ENCODE measurements at regions of chr2 and their contacts with region 1.

Region 1: DNA sequence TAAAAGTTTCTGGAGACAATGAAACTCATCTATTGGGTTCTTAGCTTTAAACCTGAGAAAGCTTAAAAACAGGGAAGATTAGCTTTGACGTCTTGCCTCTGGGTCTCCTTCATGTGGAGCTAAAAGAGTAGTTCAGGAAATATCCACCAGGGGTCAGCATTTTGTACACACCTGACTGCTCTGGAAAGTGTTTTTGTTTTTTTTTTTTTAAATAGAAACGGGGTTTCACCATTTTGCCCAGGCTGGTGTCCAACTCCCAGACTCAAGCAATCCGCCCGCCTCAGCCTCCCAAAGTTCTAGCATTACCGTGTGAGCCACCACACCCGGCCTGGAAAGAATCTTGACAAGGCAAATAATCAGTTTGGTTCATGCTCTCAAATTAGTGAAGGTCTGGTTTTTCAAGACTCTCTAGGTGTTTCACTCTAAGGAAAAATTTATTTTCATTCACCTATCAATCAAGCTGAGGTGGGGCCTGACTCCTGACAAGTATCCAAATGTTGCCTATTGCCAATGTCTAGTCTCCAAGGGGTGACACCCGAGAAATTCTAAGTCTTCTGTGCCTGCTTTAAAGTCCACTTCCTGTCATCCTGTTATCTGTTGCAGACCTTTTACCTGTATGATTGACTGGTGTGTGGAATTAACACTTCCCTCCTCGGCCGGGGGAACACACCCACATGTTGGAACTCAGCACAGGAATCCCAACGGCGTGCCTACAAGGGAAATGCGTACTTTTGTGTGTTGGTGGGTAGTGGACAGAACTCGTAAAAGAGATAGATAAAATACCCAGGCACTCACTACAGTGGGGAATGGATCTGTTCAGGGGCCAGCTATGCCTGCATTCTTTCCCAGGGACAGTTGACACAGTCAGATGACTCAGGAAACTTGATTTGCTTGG is 11.3 kb downstream of the IL1RN start:
- DNase-seq: peak in 1 of 3 donors; percentile 64
- ATAC-seq: peak; percentile 83 to 86 (median 85)
- H3K4me3 ChIP-seq: peak overlapping the region in 1 of 3 donors; percentile 13
- H3K27ac ChIP-seq: peak overlapping the region in 2 of 3 donors; percentile 23 to 33
- H3K4me1 ChIP-seq: no peaks in the 10 kb centered on the region
- H3K27me3 ChIP-seq: no peaks in the 10 kb centered on the region
- CTCF ChIP-seq: peak; percentile 76 to 89 (median 82)
- POLR2A ChIP-seq: no peak

Region 2: DNA sequence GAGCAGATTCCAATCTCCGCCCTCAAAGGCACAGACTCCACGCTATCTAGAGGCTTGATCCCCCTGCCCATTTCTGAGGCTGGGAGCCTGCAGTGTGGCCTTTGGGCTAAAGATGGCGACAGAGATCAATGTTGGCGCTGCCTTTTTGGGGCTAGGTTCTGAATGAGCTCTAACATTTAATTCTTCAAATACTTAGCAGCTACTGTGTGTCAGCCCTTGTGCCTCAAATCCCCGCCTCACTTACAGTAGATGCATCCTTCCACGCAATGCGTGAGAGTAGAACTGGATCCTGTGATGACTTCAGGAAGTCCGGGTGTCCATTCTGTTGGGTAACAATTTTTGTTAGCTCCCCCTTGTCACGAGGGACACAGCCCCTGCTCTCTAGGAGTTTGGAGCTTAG is 58.5 kb before region 1 on chr2:
- intact Hi-C with region 1: loop called (anchors 5 to 10 kb)
- DNase-seq: peak in 2 of 3 donors; percentile 40 to 55
- ATAC-seq: peak; percentile 51 to 81 (median 74)
- H3K4me3 ChIP-seq: no peak overlapping the region
- H3K27ac ChIP-seq: no peak overlapping the region
- H3K4me1 ChIP-seq: peaks cover 0 to 6% (median 0%) of the 10 kb centered on the region in 4 donors
- H3K27me3 ChIP-seq: no peaks in the 10 kb centered on the region
- CTCF ChIP-seq: peak; percentile 66 to 78 (median 74)
- POLR2A ChIP-seq: no peak

Region 3: DNA sequence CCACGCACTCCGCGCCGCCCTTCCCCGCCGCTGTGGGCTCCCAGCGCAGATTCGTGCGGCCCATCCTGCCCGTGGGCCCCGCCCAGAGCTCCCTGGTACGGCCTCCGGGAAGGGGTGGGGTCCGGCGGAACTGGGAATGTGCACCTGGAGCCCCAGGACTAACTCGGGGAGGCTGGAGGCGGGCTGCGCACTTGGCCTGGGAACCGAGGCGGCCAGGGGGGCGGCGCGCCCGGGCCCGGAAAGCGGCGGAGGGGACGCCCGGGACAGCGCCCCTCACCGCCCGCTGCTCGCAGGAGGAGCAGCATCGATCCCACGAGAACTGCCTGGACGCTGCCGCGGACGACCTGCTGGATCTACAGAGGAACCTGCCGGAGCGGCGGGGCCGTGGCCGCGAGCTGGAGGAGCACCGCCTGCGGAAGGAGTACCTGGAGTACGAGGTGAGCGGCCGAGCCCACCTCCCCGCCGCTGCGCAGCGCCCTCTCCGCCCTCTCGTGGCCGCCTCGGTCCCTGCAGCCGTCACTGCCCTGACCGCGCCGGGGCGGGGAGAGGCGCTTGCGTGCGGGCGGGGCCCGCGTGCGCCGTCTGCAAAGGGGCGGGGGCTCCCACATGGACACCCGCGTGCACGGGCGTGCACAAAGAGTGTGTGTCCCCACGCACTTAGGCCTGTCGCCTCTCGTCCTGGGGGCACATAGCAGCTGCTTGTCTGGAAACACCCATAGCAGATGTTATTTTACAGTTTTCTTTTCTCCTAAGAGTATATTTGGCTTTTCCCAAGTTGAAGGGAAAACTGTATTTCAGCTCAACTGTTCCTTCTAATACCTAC is 60.3 kb after region 1 on chr2:
- intact Hi-C with region 1: loop called (anchors 5 to 10 kb)
- DNase-seq: peak; percentile 90 to 93 (median 91)
- ATAC-seq: peak; percentile 77 to 91 (median 86)
- H3K4me3 ChIP-seq: peak overlapping the region; percentile 72 to 85 (median 80)
- H3K27ac ChIP-seq: peak overlapping the region; percentile 83 to 90 (median 88)
- H3K4me1 ChIP-seq: peaks cover 0 to 14% (median 9%) of the 10 kb centered on the region in 4 donors
- H3K27me3 ChIP-seq: no peaks in the 10 kb centered on the region
- CTCF ChIP-seq: peak; percentile 95 to 99 (median 97)
- POLR2A ChIP-seq: peak; percentile 80

Region 4: GRCh38 chr2:113240150-113240862 is 101.6 kb after region 1 on chr2:
- intact Hi-C with region 1: no loop called
- DNase-seq: peak; percentile 89 to 90 (median 89)
- ATAC-seq: peak; percentile 61 to 83 (median 72)
- H3K4me3 ChIP-seq: no peak overlapping the region
- H3K27ac ChIP-seq: peak overlapping the region in 1 of 3 donors; percentile 34
- H3K4me1 ChIP-seq: peaks cover 0 to 37% (median 3%) of the 10 kb centered on the region in 4 donors
- H3K27me3 ChIP-seq: no peaks in the 10 kb centered on the region
- CTCF ChIP-seq: no peak
- POLR2A ChIP-seq: peak; percentile 11